ENCODE measurements at regions of chr15 and their contacts with region 1.

Region 1: DNA sequence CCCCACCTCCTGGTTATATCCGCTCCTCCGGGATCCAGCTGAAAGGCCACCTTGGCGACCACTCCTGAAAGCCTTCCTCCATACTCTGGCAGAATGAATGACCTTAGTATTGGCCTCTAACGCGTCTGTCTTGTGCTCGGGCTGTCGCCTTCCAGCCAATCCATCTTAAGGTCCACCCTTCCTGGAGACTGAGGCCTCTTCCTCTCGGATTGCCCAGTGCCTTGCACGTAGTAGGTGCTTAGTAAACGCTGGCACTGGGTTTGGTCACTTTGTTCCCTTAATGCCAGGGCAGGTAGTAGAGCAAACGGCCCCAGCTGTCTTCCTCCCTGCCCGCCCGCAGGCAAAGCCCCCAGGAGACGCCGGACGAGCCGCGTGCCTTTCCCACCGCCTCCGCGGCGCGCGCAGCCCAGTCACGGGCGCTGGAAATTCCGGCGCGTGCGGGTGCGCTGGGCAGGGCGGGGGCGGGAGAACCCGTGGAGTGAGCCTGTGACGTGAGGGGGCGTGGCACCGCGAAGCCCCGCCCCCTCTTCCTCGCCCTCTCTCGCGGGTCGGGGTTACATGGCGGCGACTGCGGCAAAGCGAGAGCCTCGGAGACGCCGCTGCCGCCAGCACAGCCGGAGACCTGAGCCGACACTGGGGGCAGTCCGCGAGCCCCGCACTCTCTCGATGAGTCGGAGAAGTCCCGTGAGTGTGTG is at the start of gene MAPK6:
- DNase-seq: peak; percentile 95
- ATAC-seq: peak; percentile 83
- H3K4me3 Mint-ChIP-seq: peak within 1 kb of the TSS; percentile 96
- H3K27ac Mint-ChIP-seq: peak within 1 kb of the TSS; percentile 98
- H3K4me1 Mint-ChIP-seq: peaks cover 37% of the 10 kb centered on the region
- H3K27me3 Mint-ChIP-seq: no peaks in the 10 kb centered on the region
- CTCF ChIP-seq: no peak
- total RNA-seq, gene MAPK6: 16.1 and 16.2 TPM in 2 replicates

Region 2: DNA sequence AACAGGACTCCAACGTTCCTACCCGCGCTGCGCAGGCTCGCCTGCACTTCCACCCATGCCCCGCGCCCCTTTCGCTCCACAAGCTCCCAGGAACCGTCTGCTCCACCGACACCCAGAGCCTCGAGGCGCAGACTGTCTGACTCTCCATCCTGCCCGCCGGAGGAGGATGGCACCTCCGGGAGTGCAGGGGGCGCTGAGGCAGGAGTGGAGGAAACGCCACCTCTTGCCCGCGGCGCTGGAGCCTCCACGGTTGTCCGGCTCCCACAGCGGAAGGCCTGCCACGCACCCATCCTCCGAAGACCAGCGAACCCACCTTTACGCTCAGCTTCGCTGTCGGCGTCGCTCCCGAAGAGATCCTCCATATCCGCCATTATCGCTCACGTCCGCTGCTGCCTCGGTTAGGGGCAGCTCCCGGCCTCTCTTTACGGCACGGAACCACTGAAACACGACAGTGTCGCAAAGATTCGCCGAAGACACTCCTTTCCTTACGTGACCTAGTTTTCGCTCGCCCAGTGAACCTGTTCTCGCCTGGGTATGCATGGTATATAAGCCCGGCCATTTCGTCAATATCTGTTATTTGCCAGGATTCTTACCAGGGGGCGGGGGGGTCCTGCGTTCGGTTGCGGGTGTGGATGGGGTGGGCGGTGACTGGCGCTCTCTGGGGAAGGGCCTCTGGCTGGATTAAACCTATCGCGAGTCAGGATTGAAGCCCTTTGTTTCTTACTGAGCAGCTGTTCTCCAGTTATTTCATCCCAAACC is 47.3 kb before region 1 on chr15 and contains the start of gene LEO1:
- CTCF ChIA-PET with region 1: no interaction called
- POLR2A ChIA-PET with region 1: interaction called, 24 read pairs
- intact Hi-C with region 1: loop called (anchors 1 kb)
- DNase-seq: peak; percentile 69
- ATAC-seq: peak; percentile 96
- H3K4me3 Mint-ChIP-seq: peak within 1 kb of the TSS; percentile 100
- H3K27ac Mint-ChIP-seq: peak within 1 kb of the TSS; percentile 99
- H3K4me1 Mint-ChIP-seq: peaks cover 21% of the 10 kb centered on the region
- H3K27me3 Mint-ChIP-seq: no peaks in the 10 kb centered on the region
- CTCF ChIP-seq: no peak
- total RNA-seq, gene LEO1: 18.3 and 19.1 TPM in 2 replicates

Region 3: GRCh38 chr15:52005748-52006701 is 12.8 kb before region 1 on chr15:
- CTCF ChIA-PET with region 1: no interaction called
- POLR2A ChIA-PET with region 1: interaction called, 9 read pairs
- intact Hi-C with region 1: loop called (anchors 1 kb)
- DNase-seq: no peak
- ATAC-seq: peak; percentile 71
- H3K4me3 Mint-ChIP-seq: peak overlapping the region; percentile 3
- H3K27ac Mint-ChIP-seq: peak overlapping the region; percentile 82
- H3K4me1 Mint-ChIP-seq: peaks cover 35% of the 10 kb centered on the region
- H3K27me3 Mint-ChIP-seq: no peaks in the 10 kb centered on the region
- CTCF ChIP-seq: no peak

Region 4: DNA sequence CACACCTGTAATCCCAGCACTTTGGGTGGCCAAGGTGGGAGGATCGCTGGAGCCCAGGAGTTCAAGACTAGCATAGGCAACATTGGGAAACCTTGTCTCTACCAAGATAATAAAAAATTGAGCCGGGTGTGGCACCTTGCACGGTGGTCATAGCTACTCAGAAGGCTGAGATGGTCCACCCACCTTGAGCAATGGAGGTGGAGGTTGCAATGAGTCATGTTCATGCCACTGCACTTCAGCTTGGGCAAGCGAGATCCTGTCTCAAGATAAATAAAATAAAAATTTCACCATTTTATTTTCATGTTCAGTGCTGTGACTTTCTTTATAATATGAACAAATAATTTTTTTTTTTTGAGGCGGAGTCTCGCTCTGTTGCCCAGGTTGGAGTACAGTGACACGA is 12.7 kb after region 1 on chr15:
- CTCF ChIA-PET with region 1: no interaction called
- POLR2A ChIA-PET with region 1: no interaction called
- intact Hi-C with region 1: no loop called
- DNase-seq: no peak
- ATAC-seq: no peak
- H3K4me3 Mint-ChIP-seq: no peak overlapping the region
- H3K27ac Mint-ChIP-seq: no peak overlapping the region
- H3K4me1 Mint-ChIP-seq: peaks cover 19% of the 10 kb centered on the region
- H3K27me3 Mint-ChIP-seq: no peaks in the 10 kb centered on the region
- CTCF ChIP-seq: no peak

Region 5: DNA sequence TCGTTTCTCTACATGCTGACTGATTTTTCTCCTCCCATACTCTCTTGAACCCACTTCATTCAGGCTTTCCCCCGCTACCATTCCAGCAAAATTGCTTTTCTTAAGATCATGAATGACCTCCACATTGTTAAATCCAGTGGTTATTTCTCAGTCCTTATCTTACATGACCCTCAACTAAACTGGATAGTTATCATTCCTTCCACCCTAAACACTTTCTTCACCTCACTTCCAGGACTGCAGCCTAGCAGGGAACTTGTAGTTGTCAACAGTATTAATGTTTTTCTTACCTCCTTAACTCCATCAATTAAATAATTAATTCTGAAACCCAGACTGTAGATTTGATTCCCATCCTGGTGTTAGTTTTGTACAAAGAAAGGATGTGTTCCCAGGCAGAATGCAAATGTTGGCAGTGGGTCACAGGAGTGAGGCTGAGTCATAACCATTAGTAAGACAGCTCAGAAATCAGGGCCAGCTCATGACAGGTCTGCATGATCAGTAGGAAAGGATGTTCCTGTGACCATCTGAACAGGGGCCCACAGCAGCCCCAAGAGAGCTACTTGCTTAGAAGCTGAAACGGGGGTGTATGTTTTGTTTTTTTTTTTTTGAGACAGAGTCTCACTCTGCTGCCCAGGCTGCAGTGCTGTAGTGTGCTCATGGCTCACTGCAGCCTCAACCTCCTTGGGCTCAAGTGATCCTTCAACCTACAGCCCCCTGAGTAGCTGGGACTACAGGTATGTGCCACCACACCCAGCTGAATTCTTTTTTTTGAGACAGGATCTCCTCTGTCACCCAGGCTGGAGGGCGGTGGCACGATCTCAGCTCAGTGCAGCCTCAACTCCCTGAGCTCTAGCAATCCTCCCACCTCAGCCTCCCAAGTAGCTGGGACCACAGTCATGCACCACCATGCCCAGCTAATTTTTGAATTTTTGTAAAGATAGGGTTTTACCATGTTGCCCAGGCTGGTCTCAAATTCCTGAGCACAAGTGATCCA is 84.7 kb after region 1 on chr15:
- CTCF ChIA-PET with region 1: no interaction called
- POLR2A ChIA-PET with region 1: interaction called, 10 read pairs
- intact Hi-C with region 1: no loop called
- DNase-seq: no peak
- ATAC-seq: peak; percentile 69
- H3K4me3 Mint-ChIP-seq: no peak overlapping the region
- H3K27ac Mint-ChIP-seq: peak overlapping the region; percentile 27
- H3K4me1 Mint-ChIP-seq: peaks cover 38% of the 10 kb centered on the region
- H3K27me3 Mint-ChIP-seq: no peaks in the 10 kb centered on the region
- CTCF ChIP-seq: no peak

Region 6: DNA sequence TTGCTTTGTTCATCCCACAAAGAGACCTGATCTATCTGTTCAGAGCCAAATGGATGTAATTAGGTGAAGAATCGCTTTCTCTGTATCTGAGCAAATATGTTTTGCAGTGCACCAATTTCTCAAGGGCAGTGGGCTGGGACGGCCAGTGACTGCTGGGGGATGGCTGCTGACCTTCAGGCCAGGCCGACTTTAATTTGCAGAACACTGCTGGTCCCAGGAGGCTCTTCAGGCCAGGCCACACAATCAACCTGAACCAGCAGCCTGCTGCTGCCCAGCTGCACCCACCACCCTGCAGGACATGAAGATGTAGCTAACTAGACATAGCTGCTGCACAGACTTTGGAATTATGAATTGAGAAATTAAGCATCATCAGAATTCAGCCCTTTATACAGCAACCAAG is 965.7 kb after region 1 on chr15:
- CTCF ChIA-PET with region 1: no interaction called
- POLR2A ChIA-PET with region 1: no interaction called
- intact Hi-C with region 1: no loop called
- DNase-seq: no peak
- ATAC-seq: no peak
- H3K4me3 Mint-ChIP-seq: no peak overlapping the region
- H3K27ac Mint-ChIP-seq: no peak overlapping the region
- H3K4me1 Mint-ChIP-seq: peaks cover 5% of the 10 kb centered on the region
- H3K27me3 Mint-ChIP-seq: no peaks in the 10 kb centered on the region
- CTCF ChIP-seq: no peak